ENCODE measurements at regions of chr19 and their contacts with region 1.

Region 1: GRCh38 chr19:35179830-35180229 is 25.3 kb downstream of the FXYD5 start:
- DNase-seq: no peak
- H3K4me3 ChIP-seq: peak overlapping the region in 1 of 7 experiments; percentile 48
- H3K27ac ChIP-seq: no peak overlapping the region
- H3K4me1 ChIP-seq: peaks cover 0 to 11% (median 8%) of the 10 kb centered on the region in 4 experiments
- H3K27me3 ChIP-seq: no peaks in the 10 kb centered on the region

Region 2: GRCh38 chr19:35146746-35147459 is 32.9 kb before region 1 on chr19:
- CTCF ChIA-PET with region 1: no interaction called
- POLR2A ChIA-PET with region 1: no interaction called
- DNase-seq: peak in 2 of 3 donors; percentile 60 to 65
- H3K4me3 ChIP-seq: no peak overlapping the region
- H3K27ac ChIP-seq: no peak overlapping the region
- H3K4me1 ChIP-seq: peaks cover 0 to 40% (median 26%) of the 10 kb centered on the region in 4 experiments
- H3K27me3 ChIP-seq: peaks cover 0 to 29% (median 13%) of the 10 kb centered on the region in 5 experiments

Region 3: DNA sequence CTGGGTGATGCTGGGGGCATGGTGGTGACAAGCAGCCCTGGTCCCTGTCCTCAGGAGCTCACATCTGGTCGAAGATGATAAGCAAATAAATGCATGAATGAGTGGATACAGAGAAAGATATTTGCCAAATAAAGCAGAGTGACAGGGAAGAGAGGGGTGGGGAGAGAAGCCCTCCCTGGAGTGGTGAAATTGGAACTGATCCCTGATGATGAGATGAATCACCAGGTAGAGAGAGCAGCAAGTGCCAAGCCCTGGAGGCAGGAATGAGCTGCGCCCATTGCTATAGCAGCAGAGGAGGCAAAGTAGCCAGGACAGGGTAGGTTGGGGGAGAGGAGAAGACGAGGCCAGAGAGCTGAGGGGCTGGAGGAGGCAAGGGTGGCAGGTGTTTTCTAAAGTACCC is 11.6 kb before region 1 on chr19:
- CTCF ChIA-PET with region 1: interaction called, 11 read pairs
- POLR2A ChIA-PET with region 1: no interaction called
- DNase-seq: peak in 1 of 3 donors; percentile 52
- H3K4me3 ChIP-seq: peak overlapping the region in 1 of 7 experiments; percentile 11
- H3K27ac ChIP-seq: peak overlapping the region in 1 of 2 experiments; percentile 69
- H3K4me1 ChIP-seq: peaks cover 14 to 54% (median 39%) of the 10 kb centered on the region in 4 experiments
- H3K27me3 ChIP-seq: no peaks in the 10 kb centered on the region

Region 4: DNA sequence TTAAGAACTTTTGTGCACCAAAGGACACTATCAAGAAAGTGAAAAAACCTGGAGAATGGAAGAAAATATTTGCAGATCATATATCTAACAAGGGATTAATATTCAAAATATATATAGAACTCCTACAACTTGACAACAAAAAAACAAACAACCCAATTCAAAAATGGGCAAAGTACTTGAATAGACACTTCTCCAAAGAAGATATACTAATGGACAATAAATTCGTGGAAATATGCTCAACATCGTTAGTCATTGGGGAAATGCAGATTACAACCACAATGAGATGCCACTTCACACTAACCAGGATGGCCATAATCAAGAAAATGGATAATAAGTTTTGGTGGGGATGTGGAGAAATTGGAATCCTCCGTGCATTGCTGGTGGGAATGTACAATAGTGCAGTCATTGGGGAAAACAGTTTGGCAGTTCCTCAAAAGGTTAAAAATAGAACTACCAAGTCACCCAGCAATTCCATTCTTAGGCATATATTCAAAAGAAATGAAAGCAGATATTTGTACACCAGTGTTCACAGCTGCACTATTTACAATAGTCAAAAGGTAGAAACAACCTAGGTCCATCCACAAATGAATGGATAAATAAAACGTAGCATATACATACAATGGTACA is 66.7 kb after region 1 on chr19:
- CTCF ChIA-PET with region 1: no interaction called
- POLR2A ChIA-PET with region 1: no interaction called
- DNase-seq: peak in 1 of 3 donors; percentile 34
- H3K4me3 ChIP-seq: no peak overlapping the region
- H3K27ac ChIP-seq: no peak overlapping the region
- H3K4me1 ChIP-seq: peaks cover 0 to 30% (median 19%) of the 10 kb centered on the region in 4 experiments
- H3K27me3 ChIP-seq: peaks cover 0 to 18% (median 6%) of the 10 kb centered on the region in 5 experiments